ENCODE measurements at regions of chr3 and their contacts with region 1.

Region 1: DNA sequence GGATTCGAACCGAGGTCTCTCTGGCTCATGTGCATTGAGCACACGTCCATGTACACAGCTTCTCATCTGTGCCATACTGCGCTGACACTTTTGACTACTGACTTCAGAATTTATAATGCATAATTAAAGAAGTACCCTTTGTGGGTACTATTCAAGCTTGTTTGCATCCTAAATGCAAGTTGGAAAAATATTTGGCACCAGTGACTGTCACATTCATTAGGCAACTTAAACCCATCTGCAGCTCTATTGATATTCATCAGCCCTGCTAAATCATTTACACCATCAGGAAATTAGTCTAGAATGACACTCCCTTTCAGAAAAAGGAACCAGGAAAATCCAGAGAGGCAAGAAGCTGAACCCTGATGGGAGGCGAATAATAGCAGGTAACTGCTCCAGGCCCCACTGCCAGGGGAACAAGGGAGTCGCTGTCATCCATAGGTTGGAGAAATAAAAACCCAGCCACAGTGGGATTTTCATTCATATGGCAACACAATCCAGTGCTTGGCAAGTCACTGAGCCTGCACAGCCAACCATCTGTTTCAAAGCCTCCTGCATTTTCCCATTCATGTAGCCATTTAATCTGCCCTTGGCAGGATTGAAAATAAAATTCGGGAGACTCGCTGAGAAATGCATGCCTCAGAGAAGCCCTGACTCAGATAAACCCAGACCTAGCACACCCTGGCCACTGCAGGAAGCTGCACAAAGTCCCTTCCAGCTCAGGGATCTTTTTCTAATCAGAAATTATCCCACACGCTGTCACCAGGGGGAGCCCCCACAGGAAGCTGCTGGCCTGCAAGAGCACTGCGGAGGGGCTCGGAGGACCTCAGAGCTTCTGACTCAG is 103.0 kb upstream of the VEPH1 start:
- DNase-seq: peak; percentile 39
- CTCF ChIP-seq: peak; percentile 65

Region 2: GRCh38 chr3:157282261-157283191 is 323.7 kb before region 1 on chr3:
- in situ Hi-C with region 1: no loop called
- DNase-seq: no peak
- CTCF ChIP-seq: no peak

Region 3: DNA sequence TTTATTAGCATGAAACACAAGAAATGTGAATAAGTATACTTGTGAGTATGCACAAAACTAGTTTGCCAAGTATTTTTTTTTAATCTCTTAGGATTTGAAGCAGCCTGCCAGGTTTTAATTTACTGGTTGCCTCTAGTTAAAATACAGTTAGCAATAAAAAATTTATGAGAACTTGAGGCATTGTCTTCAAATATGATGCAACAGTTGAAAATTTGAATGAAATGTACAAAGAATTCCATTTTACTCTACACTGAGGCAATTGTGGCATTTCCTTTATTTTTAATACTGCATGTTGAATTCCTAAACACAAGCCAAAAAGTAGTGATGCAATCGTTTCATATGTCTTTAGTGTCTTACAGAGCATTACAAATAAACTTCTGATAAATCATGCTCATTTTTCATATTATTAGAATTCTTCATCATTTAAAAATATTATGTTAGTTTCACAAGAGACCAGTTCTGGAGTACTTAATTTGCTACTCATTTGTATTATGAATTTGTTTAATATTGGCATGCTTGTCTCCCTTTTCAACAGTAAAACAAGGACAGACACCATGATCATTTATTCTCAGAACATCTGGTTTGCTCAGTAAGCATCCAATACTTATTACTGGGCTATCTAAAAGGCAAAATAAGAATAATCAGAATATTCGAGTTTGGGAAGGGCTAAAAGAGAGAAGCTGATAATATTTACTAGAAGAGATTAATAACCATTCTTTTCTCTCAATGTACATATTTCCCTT is 294.4 kb before region 1 on chr3:
- in situ Hi-C with region 1: no loop called
- DNase-seq: no peak
- CTCF ChIP-seq: no peak

Region 4: GRCh38 chr3:158097593-158098308 is 491.5 kb after region 1 on chr3:
- in situ Hi-C with region 1: no loop called
- DNase-seq: peak; percentile 93
- CTCF ChIP-seq: no peak

Region 5: DNA sequence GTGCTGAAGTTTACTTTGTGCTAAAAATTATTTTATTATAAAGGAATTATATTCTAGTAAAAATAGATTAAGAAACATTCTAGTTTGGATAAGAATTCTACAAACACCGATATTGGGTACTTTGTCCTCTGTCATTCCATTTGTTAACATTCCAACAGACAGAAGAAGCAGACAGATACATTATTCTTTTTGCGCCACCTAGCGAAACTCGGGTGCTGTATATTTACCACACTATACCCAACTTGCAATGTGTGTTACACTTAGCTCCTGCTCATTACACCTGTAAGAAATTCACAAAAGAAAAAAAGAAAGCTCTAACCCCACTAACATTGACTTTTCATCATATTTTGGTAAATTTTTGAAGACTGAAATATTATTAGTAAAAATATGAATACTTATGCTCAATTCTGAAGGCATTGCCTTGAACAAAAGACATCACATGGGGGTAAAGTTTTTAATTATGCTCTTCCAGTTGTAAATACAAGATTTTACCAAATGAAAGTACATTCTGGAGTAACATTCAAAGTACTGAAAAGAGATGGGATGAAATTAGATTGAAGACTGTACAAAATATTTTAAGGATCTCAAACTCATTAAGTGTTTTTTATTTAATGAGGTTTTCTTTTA is 828.3 kb after region 1 on chr3:
- in situ Hi-C with region 1: loop called (anchors 25 kb)
- DNase-seq: no peak
- CTCF ChIP-seq: peak; percentile 62

Region 6: GRCh38 chr3:158539414-158540014 is 933.3 kb after region 1 on chr3:
- in situ Hi-C with region 1: loop called (anchors 25 kb)
- DNase-seq: no peak
- CTCF ChIP-seq: peak; percentile 35

Region 7: GRCh38 chr3:158790901-158791589 is 1184.8 kb after region 1 on chr3:
- in situ Hi-C with region 1: loop called (anchors 25 kb)
- DNase-seq: peak; percentile 37
- CTCF ChIP-seq: peak; percentile 66

Measured in GM13976 (cell line).